Mammary epithelial cell (primary cell): ENCODE measurements at regions of chr6 and their contacts with region 1.

Region 1: DNA sequence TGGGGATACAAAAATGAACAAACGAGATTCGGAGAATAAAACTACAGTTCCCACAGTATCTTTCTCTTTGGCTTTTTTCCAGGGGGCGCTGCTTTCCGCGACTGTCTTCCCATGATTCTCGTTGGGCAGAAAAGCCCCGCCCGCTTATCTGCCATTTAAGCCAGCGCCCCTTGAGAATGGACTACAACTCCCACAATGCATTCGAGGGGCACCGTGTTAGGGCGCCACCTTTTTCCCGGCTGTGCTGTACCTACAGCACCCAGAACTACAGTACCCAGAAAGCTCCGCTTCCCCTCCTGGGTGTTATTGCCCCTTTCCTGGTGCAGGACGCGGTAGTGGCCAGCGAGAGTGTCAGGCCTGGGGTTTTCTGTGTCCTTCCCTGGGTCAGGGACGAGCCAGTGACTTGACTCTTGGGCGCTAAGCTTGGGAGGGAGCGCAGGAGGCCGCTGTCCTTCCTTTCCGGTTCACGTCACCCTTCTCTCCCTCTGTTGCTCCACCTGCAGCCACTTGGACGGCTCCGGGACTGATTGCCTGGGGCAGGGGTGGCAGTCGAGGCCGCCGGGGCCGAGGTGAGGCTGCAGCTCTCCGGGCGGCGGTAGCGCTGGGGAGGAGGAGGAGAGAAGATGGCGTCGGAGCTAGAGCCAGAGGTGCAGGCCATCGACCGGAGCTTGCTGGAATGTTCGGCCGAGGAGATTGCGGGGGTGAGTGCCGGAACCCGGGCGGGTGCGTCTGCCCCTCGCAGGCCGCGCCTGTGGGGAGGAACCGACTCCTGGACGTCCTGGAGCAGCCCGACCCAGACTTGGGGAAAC is at the start of gene UBR2:
- DNase-seq: peak; percentile 98
- H3K4me3 ChIP-seq: peak within 1 kb of the TSS; percentile 78 to 84 (median 83)
- H3K27ac ChIP-seq: peak within 1 kb of the TSS; percentile 79
- H3K4me1 ChIP-seq: peaks cover 4% of the 10 kb centered on the region
- H3K27me3 ChIP-seq: no peaks in the 10 kb centered on the region
- CTCF ChIP-seq: peak in 1 of 2 donors; percentile 39
- total RNA-seq, gene UBR2: 23.8 to 31.3 TPM

Region 2: DNA sequence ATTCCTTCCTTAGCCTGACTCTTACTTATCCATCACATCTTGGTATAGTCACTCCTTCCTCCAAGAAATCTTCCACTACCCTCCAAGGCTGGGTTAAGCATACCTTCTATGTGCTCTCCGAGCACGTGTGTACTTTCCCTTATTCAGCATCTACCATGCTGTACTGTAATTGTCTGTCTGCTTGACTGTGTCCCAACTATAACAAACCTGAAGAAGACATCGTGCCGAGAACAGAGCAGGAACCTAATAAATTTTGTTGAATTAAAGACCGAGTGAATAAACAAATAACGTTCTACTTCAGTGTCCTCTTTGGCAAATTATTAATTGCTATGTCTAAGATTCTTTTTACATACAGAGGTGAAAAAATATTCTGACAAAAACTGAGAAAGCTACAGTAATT is 704.5 kb before region 1 on chr6:
- CTCF ChIA-PET with region 1: no interaction called
- dilution Hi-C with region 1: no loop called
- in situ Hi-C with region 1: no loop called
- intact Hi-C with region 1: no loop called
- DNase-seq: no peak
- H3K4me3 ChIP-seq: no peak overlapping the region
- H3K27ac ChIP-seq: no peak overlapping the region
- H3K4me1 ChIP-seq: no peaks in the 10 kb centered on the region
- H3K27me3 ChIP-seq: no peaks in the 10 kb centered on the region
- CTCF ChIP-seq: no peak

Region 3: DNA sequence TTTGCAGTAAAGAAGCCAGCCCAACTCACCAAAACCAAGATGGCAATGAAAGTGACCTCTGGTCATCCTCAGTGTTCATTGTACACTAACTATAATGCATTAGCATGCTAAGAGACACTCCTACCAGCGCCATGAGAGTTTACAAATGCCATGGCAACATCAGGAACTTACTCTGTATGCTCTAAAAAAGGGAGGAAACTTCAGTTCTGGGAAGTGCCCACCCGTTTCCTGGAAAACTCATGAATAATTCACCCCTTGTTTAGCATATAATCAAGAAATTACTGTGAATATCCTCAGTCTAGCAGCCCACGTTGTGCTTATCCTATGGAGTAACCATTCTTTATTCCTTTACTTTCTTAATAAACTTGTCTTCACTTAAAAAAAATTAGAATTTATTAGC is 92.8 kb before region 1 on chr6:
- CTCF ChIA-PET with region 1: no interaction called
- dilution Hi-C with region 1: loop called (anchors 5 kb)
- in situ Hi-C with region 1: no loop called
- intact Hi-C with region 1: no loop called
- DNase-seq: no peak
- H3K4me3 ChIP-seq: no peak overlapping the region
- H3K27ac ChIP-seq: no peak overlapping the region
- H3K4me1 ChIP-seq: no peaks in the 10 kb centered on the region
- H3K27me3 ChIP-seq: no peaks in the 10 kb centered on the region
- CTCF ChIP-seq: no peak

Region 4: GRCh38 chr6:42498473-42499128 is 65.3 kb before region 1 on chr6:
- CTCF ChIA-PET with region 1: no interaction called
- dilution Hi-C with region 1: no loop called
- in situ Hi-C with region 1: no loop called
- intact Hi-C with region 1: no loop called
- DNase-seq: no peak
- H3K4me3 ChIP-seq: no peak overlapping the region
- H3K27ac ChIP-seq: no peak overlapping the region
- H3K4me1 ChIP-seq: no peaks in the 10 kb centered on the region
- H3K27me3 ChIP-seq: no peaks in the 10 kb centered on the region
- CTCF ChIP-seq: no peak